ENCODE measurements at regions of chr3 and their contacts with region 1.

Region 1: DNA sequence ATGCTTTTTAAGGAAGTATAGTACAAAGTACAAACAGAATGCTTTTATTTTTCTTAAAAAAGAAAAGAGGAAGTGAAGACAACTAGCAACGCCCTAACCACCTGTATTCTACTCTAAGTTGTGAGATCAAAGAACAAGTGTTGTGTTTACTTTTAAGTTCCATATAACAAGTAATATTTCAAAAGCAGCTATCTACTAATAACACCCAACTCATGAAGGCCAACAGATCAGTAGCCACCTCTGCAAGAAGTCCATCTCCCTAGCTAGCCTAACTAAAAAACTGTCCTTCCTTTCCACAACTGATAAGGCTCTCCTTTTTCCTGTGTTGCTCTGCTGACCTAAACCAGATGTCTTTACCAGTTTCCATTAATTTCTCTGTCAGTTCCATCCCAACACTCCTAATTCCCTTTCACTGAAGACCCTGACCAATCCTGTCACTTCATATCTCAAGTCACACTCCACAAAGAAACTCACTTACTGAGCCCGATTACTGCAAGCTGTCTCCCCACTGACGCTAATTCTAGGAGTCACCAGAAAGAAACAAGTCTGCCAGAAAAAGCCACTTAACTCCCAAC is 26.9 kb downstream of the PHC3 start:
- DNase-seq: peak in 6 of 9 donors; percentile 23 to 48 (median 36)
- ATAC-seq: peak; percentile 84
- H3K4me3 ChIP-seq: peak overlapping the region; percentile 21
- H3K4me3 Mint-ChIP-seq: peak overlapping the region; percentile 72 to 91 (median 82)
- H3K27ac ChIP-seq: peak overlapping the region; percentile 60
- H3K27ac Mint-ChIP-seq: peak overlapping the region; percentile 80 to 97 (median 95)
- H3K4me1 ChIP-seq: peaks cover 14 to 28% of the 10 kb centered on the region in 2 donors
- H3K4me1 Mint-ChIP-seq: peaks cover 36 to 75% (median 57%) of the 10 kb centered on the region in 7 donors
- H3K27me3 ChIP-seq: no peaks in the 10 kb centered on the region
- H3K27me3 Mint-ChIP-seq: no peaks in the 10 kb centered on the region

Region 2: GRCh38 chr3:168878655-168879054 is 1276.0 kb before region 1 on chr3:
- CTCF ChIA-PET with region 1: no interaction called
- POLR2A ChIA-PET with region 1: no interaction called
- intact Hi-C with region 1: no loop called
- DNase-seq: no peak
- ATAC-seq: no peak
- H3K4me3 ChIP-seq: no peak overlapping the region
- H3K4me3 Mint-ChIP-seq: no peak overlapping the region
- H3K27ac ChIP-seq: no peak overlapping the region
- H3K27ac Mint-ChIP-seq: no peak overlapping the region
- H3K4me1 ChIP-seq: no peaks in the 10 kb centered on the region
- H3K4me1 Mint-ChIP-seq: peaks cover 0 to 4% (median 0%) of the 10 kb centered on the region in 7 donors
- H3K27me3 ChIP-seq: no peaks in the 10 kb centered on the region
- H3K27me3 Mint-ChIP-seq: no peaks in the 10 kb centered on the region

Region 3: DNA sequence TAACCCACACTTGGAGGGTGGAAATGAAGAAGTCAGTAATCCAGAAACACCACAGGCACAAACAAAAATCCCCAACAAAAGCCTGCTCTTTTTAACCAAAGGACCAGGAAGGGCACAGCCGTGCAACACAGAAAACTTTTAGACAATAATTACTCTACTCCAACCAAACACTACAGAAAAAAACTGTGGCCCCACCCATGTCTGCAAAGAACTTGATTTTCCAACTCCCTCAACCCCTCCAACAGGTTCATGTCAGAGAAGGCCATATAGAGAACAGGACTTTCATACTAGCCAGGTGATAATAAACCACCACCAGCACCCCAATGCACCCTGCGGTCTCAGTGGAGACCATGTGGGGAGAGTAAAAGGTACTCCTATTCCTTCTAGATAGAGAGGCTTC is 10.1 kb after region 1 on chr3:
- CTCF ChIA-PET with region 1: no interaction called
- POLR2A ChIA-PET with region 1: interaction called, 14 read pairs
- intact Hi-C with region 1: no loop called
- DNase-seq: no peak
- ATAC-seq: no peak
- H3K4me3 ChIP-seq: no peak overlapping the region
- H3K4me3 Mint-ChIP-seq: peak overlapping the region in 8 of 10 donors; percentile 35 to 73 (median 48)
- H3K27ac ChIP-seq: peak overlapping the region; percentile 47
- H3K27ac Mint-ChIP-seq: peak overlapping the region in 8 of 9 donors; percentile 54 to 87 (median 74)
- H3K4me1 ChIP-seq: peaks cover 11 to 31% of the 10 kb centered on the region in 2 donors
- H3K4me1 Mint-ChIP-seq: peaks cover 47 to 81% (median 75%) of the 10 kb centered on the region in 7 donors
- H3K27me3 ChIP-seq: no peaks in the 10 kb centered on the region
- H3K27me3 Mint-ChIP-seq: no peaks in the 10 kb centered on the region

Region 4: GRCh38 chr3:170523248-170523647 is 368.6 kb after region 1 on chr3:
- CTCF ChIA-PET with region 1: no interaction called
- POLR2A ChIA-PET with region 1: no interaction called
- intact Hi-C with region 1: no loop called
- DNase-seq: no peak
- ATAC-seq: no peak
- H3K4me3 ChIP-seq: no peak overlapping the region
- H3K4me3 Mint-ChIP-seq: no peak overlapping the region
- H3K27ac ChIP-seq: no peak overlapping the region
- H3K27ac Mint-ChIP-seq: no peak overlapping the region
- H3K4me1 ChIP-seq: no peaks in the 10 kb centered on the region
- H3K4me1 Mint-ChIP-seq: peaks cover 0 to 4% (median 0%) of the 10 kb centered on the region in 7 donors
- H3K27me3 ChIP-seq: no peaks in the 10 kb centered on the region
- H3K27me3 Mint-ChIP-seq: peaks cover 0 to 10% (median 6%) of the 10 kb centered on the region in 5 donors

Region 5: GRCh38 chr3:170563712-170564423 is 409.2 kb after region 1 on chr3:
- CTCF ChIA-PET with region 1: no interaction called
- POLR2A ChIA-PET with region 1: no interaction called
- intact Hi-C with region 1: no loop called
- DNase-seq: no peak
- ATAC-seq: no peak
- H3K4me3 ChIP-seq: no peak overlapping the region
- H3K4me3 Mint-ChIP-seq: peak overlapping the region in 1 of 10 donors; percentile 52
- H3K27ac ChIP-seq: no peak overlapping the region
- H3K27ac Mint-ChIP-seq: no peak overlapping the region
- H3K4me1 ChIP-seq: no peaks in the 10 kb centered on the region
- H3K4me1 Mint-ChIP-seq: peaks cover 0 to 21% (median 3%) of the 10 kb centered on the region in 7 donors
- H3K27me3 ChIP-seq: no peaks in the 10 kb centered on the region
- H3K27me3 Mint-ChIP-seq: peaks cover 0 to 17% (median 10%) of the 10 kb centered on the region in 5 donors

Measured in naive thymus-derived CD4-positive, alpha-beta T cell (primary cell).